ENCODE measurements at regions of chr16 and their contacts with region 1.

Region 1: DNA sequence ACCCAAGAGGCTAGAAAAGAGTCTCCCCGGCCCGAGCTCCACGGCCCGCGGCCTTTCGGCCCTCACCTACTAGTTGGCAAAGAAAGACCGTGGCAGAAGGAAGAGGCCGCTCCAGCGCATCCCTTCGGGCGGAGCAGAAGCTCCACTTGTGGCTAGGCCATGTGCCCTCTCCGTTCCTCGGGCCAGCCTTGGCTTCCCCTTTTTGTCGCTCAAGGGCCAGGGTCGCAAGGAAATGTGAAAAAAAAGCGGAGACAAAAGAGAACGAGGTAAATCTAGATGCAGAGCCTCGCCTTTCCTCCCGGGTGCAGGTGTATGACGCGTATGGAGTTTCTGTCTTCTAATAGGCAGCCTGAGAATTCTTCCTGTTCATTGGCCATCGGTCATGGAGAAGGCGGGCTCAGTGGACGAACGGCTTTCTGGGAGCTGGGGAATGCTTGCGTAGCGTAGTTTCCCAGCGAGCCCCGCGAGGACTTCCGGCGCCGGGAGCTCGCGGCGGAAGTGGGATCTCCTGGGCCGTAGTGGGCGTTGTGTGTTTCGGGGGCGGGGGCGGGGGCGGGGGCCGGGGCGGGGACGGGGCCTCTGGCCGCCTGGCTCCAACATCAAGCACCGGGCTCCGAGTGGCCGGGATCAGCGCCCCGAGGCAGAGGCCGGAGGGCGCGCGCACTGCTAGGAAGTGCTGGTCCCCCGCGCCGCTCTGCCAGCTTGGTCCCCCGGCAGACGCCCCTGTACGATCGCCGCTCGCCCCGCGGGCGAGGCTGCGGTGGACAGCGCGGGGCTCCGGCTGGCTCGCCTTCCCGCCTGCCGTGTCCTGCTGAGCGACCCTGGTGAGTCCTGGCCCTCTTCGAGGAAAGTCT is at the start of gene ZNF213:
- DNase-seq: peak; percentile 97
- ATAC-seq: peak; percentile 96
- H3K4me3 ChIP-seq: peak within 1 kb of the TSS; percentile 87
- H3K27ac ChIP-seq: peak within 1 kb of the TSS; percentile 82
- H3K4me1 ChIP-seq: peaks cover 5% of the 10 kb centered on the region
- H3K27me3 ChIP-seq: no peaks in the 10 kb centered on the region
- CTCF ChIP-seq: no peak
- POLR2A ChIP-seq: peak; percentile 67
- RAD21 ChIP-seq: no peak
- total RNA-seq, gene ZNF213: 0.56 and 0.72 TPM in 2 replicates

Region 2: DNA sequence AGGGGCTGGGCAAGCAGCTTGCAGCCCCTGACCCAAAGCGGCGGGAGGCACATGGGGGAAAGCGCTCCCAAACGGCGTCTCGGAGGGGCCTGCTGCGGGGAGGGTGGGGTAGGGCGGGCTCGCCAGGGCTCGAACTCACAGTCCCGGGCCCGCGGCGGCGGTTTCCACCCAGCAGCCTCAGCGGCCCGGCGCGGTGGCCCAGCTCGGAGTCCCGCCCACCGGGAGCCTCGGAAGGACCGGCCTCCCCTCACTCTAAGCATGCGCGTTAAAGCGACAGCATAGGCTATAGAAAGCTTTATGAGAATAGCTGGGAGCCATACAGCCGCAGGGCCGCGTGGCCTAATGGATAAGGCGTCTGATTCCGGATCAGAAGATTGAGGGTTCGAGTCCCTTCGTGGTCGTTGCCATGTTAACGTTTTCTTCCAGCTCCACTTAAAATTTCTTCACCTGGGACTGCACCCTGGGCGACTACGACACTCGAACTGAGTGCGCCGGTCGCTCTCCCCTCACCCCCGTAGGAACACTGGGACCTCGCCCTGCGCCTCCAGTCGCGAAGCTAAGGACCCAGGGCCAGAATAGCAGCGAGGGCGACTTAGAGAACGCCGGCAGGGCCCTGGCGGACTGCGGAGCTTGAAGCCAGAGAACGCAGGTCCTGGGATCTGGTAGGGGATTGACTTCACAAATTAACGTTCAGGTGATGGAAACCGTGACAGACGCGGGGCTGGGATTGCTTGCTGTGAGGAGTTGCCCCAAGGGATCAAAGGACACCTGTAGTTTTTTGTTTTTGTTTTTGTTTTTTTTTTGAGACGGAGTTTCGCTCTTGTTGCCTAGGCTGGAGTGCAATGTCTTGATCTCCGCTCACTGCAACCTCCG is 15.8 kb after region 1 on chr16:
- CTCF ChIA-PET with region 1: interaction called, 6 read pairs
- POLR2A ChIA-PET with region 1: interaction called, 5 read pairs
- dilution Hi-C with region 1: no loop called
- in situ Hi-C with region 1: no loop called
- intact Hi-C with region 1: loop called (anchors 1 kb)
- DNase-seq: peak; percentile 92
- ATAC-seq: peak; percentile 84
- H3K4me3 ChIP-seq: peak overlapping the region; percentile 58
- H3K27ac ChIP-seq: peak overlapping the region; percentile 61
- H3K4me1 ChIP-seq: peaks cover 3% of the 10 kb centered on the region; the same call in 1 of the 2 replicates
- H3K27me3 ChIP-seq: no peaks in the 10 kb centered on the region
- CTCF ChIP-seq: no peak
- POLR2A ChIP-seq: no peak
- RAD21 ChIP-seq: no peak

Region 3: GRCh38 chr16:3166510-3166895 is 31.7 kb after region 1 on chr16:
- CTCF ChIA-PET with region 1: interaction called, 7 read pairs
- POLR2A ChIA-PET with region 1: no interaction called
- dilution Hi-C with region 1: no loop called
- in situ Hi-C with region 1: no loop called
- intact Hi-C with region 1: loop called (anchors 2 kb)
- DNase-seq: no peak
- ATAC-seq: no peak
- H3K4me3 ChIP-seq: no peak overlapping the region
- H3K27ac ChIP-seq: no peak overlapping the region
- H3K4me1 ChIP-seq: no peaks in the 10 kb centered on the region
- H3K27me3 ChIP-seq: peaks cover 26% of the 10 kb centered on the region
- CTCF ChIP-seq: no peak
- POLR2A ChIP-seq: no peak
- RAD21 ChIP-seq: no peak

Region 4: GRCh38 chr16:3536271-3536731 is 401.5 kb after region 1 on chr16:
- CTCF ChIA-PET with region 1: no interaction called
- POLR2A ChIA-PET with region 1: interaction called, 17 read pairs
- dilution Hi-C with region 1: no loop called
- in situ Hi-C with region 1: no loop called
- intact Hi-C with region 1: no loop called
- DNase-seq: peak; percentile 93
- ATAC-seq: peak; percentile 93
- H3K4me3 ChIP-seq: no peak overlapping the region
- H3K27ac ChIP-seq: peak overlapping the region; percentile 99; the same call in 1 of the 2 replicates
- H3K4me1 ChIP-seq: peaks cover 20% of the 10 kb centered on the region
- H3K27me3 ChIP-seq: no peaks in the 10 kb centered on the region
- CTCF ChIP-seq: no peak
- POLR2A ChIP-seq: no peak
- RAD21 ChIP-seq: no peak

Measured in IMR-90 (cell line).